Activated T-helper 1 cell treated with anti-CD3 and anti-CD28 coated beads, Interleukin-12 subunit alpha, Interleukin-12 subunit beta, Interleukin-2, Interleukin-4 antibody, amounts not matched to agents 30 ng/mL and 10 ng/mL and 1 ng/mL, durations not matched to agents 14 hours and 24 hours and 36 hours (primary cell): ENCODE measurements at regions of chr12 and their contacts with region 1.

Region 1: DNA sequence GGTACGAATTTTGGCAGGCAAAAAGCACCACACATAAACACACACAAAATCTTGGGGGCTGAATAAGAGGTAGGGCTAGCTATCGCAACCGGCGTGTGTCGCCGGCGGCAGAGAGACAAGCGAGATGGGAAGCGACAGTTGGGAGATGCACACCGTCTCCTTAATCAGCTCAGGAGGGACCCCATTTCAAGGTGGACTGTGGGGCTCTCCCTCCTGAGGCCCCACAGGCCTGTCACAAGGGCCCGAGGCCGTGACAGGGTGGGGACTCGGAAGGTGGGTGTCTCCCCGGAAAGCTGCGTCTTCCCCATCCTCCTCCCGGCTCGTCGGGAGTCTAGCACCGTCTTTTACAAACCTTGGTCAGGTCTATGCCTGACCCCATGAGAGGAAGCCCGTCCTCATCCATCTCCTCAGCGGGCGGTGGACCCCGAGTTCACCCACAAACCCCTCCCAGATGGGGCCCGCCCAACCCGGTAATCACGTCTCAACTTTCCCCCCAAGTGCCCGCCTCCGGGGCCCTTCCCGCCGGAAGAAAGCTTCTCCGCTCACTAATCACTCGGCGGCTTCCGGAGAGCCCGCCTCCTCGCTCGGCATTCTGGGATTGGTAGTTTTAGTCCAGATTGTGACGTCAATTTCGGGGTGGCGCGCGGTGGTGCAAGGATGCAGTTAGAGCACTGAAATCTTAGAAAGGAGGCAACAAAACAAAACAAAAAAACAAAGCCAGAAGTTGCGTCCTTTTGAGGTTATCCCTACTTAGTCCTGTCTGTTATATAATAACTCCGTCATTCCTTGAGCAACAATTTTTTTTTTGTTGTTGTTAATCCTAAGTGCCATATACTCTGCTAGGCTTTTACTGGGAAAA is at the start of gene WASHC3:
- DNase-seq: peak; percentile 94
- H3K4me3 Mint-ChIP-seq: peak within 1 kb of the TSS; percentile 93
- H3K27ac Mint-ChIP-seq: peak within 1 kb of the TSS; percentile 97
- H3K4me1 Mint-ChIP-seq: peaks cover 42% of the 10 kb centered on the region
- H3K27me3 Mint-ChIP-seq: no peaks in the 10 kb centered on the region
- total RNA-seq, gene WASHC3: 20.4 and 26.3 TPM in 2 replicates

Region 2: GRCh38 chr12:100266835-100267618 is 1794.8 kb before region 1 on chr12 and contains the starts of genes DEPDC4 and SCYL2:
- intact Hi-C with region 1: loop called (anchors 5 kb)
- DNase-seq: peak; percentile 88
- H3K4me3 Mint-ChIP-seq: peak within 1 kb of the TSS; percentile 99
- H3K27ac Mint-ChIP-seq: peak within 1 kb of the TSS; percentile 99
- H3K4me1 Mint-ChIP-seq: peaks cover 36% of the 10 kb centered on the region
- H3K27me3 Mint-ChIP-seq: no peaks in the 10 kb centered on the region
- total RNA-seq, gene DEPDC4: 1.1 and 2.1 TPM in 2 replicates
- total RNA-seq, gene SCYL2: 33.0 and 38.9 TPM in 2 replicates

Region 3: GRCh38 chr12:101799774-101800173 is 262.0 kb before region 1 on chr12:
- intact Hi-C with region 1: loop called (anchors 5 kb)
- DNase-seq: no peak
- H3K4me3 Mint-ChIP-seq: peak overlapping the region; percentile 1
- H3K27ac Mint-ChIP-seq: peak overlapping the region; percentile 55
- H3K4me1 Mint-ChIP-seq: peaks cover 54% of the 10 kb centered on the region
- H3K27me3 Mint-ChIP-seq: no peaks in the 10 kb centered on the region

Region 4: DNA sequence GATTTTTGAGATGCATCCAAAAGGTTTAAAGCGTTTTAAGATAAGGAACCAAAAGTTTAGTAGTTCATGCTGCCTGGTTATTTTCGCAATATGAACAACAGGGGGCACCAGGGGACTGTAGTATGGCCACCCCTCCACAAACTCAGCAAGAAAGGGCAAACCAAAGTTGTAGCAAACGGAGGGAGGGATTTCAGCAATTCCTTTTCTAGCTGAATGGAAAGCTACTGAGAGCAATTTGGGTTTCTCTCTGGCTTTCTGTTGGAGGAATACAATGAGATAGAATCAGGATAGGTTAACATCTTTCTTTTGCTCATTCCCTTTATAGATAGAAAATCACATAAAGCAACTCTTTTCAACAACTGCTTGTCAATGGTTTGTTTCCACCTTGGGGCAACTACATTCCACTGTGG is 121.9 kb before region 1 on chr12:
- intact Hi-C with region 1: loop called (anchors 1 kb)
- DNase-seq: peak; percentile 45
- H3K4me3 Mint-ChIP-seq: no peak overlapping the region
- H3K27ac Mint-ChIP-seq: no peak overlapping the region
- H3K4me1 Mint-ChIP-seq: peaks cover 39% of the 10 kb centered on the region
- H3K27me3 Mint-ChIP-seq: peaks cover 8% of the 10 kb centered on the region

Region 5: DNA sequence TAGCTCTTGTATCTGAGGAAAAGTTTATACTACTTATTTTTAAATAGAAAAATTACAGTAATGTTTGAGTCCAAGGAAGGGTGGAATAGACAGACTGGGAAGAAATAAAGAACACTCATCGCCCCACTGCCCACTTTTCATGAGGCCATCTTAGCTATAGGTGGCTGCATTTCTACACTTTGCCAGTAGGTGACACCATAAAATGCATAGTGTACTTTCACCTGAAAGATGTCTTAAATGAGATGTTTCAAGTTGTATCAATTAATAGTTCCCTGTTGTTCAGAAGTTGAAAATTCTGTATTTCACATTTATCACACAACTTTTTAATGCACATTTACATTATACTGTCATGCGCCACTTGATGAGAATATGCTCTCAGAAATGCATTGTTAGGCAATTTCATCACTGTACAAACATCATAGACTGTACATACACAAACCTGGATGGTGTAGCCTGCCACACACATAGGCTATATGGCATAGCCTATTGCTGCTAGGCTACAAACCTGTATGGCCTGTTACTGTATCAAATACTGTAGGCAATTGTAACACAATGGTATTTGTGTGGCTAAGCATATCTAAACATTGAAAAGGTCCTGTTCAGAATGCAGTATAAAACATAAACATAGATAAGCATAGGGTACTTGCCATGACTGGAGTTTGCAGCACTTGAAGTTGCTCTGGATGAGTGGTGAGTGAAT is 108.3 kb after region 1 on chr12:
- intact Hi-C with region 1: loop called (anchors 5 kb)
- DNase-seq: no peak
- H3K4me3 Mint-ChIP-seq: no peak overlapping the region
- H3K27ac Mint-ChIP-seq: no peak overlapping the region
- H3K4me1 Mint-ChIP-seq: peaks cover 29% of the 10 kb centered on the region
- H3K27me3 Mint-ChIP-seq: no peaks in the 10 kb centered on the region

Region 6: GRCh38 chr12:103503977-103504376 is 1442.2 kb after region 1 on chr12:
- intact Hi-C with region 1: loop called (anchors 5 kb)
- DNase-seq: peak; percentile 28
- H3K4me3 Mint-ChIP-seq: no peak overlapping the region
- H3K27ac Mint-ChIP-seq: no peak overlapping the region
- H3K4me1 Mint-ChIP-seq: peaks cover 41% of the 10 kb centered on the region
- H3K27me3 Mint-ChIP-seq: peaks cover 19% of the 10 kb centered on the region